ENCODE measurements at regions of chr19 and their contacts with region 1.

Region 1: DNA sequence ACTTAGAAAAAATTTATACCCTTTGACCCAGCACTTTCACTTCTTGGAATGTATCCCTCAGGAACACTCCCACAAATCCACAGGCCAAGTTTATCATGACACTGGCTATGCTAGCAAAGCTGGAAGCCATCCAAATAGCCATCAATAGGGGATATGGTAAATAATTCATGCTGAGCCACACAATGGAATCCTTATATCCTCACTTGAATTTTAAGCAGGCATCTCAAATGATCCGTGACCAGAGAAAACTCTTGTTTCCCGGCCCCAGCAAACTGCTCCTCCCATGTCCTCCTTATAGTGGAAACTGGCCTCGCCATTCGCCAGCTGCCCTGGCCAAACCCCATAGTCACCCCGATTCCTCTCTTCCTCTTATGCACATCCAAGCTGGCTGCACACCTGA is 37.6 kb downstream of the GRIK5 start:
- DNase-seq: no peak
- ATAC-seq: no peak

Region 2: GRCh38 chr19:41912899-41913537 is 119.4 kb before region 1 on chr19:
- intact Hi-C with region 1: no loop called
- DNase-seq: no peak
- ATAC-seq: no peak

Region 3: GRCh38 chr19:41945135-41945766 is 87.2 kb before region 1 on chr19:
- intact Hi-C with region 1: no loop called
- DNase-seq: no peak
- ATAC-seq: peak; percentile 29 to 79

Region 4: DNA sequence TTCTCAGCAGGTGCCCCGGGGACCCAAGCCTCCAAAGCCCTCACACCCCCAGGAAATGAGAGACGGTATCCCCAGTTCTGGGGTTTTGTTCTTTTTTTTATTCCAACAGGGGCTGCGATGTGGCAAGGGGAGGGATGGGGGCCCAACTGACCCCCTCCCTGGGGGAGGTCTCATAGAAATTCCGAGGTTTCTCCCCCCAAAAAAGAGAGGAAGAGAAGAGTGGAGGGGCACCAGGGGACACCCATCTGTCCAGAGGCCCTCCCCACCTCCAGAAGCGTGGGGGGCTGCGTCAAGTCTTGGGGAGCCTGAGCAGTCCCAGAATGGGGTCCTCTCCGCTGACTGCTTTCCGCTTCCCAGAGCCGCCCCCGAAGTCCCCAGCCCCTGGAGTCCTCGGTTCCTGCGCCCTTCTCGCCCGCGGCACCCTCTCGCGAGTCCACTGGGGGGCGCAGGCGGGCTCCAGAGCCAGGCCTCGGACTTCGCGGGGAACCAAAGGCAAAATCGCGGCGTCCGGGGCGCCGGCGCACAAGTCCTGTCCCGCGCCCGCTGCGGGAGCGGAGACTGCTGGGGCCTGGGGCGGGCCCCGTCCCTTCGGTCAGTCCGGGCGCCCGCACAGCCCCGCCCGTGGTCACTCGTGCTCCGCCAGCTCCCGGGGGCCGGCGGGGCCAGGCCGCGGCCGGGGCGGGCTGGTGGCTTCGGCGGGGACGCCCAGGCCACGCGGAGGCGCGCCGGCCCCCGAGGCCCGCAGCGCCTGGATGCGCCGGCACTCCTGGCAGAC is 34.0 kb before region 1 on chr19:
- intact Hi-C with region 1: loop called in 1 of 2 experiments (anchors 5 kb)
- DNase-seq: peak; percentile 43
- ATAC-seq: peak in 1 of 2 donors; percentile 4

Region 5: DNA sequence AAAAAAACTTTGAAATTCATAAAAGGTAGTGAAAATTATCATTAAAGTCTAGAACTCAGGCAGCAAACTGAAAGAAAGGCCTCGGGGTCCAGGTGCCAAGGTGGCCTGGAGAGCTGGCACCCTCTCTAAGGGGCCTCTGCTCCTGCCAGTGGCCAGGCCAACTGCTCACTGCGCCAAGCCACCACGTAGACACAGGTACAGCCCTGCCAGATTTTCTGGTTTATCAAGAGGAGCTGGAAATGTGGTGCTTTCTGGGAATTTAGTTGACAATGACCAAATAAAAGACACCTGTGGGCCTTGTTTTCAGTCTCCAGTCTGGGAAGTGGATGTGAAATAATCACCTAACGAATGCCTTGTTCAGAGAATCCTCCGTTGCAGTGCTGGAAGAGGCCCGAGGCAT is 66.3 kb after region 1 on chr19:
- intact Hi-C with region 1: no loop called
- DNase-seq: no peak
- ATAC-seq: no peak

Measured in left cardiac atrium (tissue), 4 donors.